Activated B cell treated with CpG ODN at 0.5 μM for 24 hours (primary cell): ENCODE measurements at regions of chr6 and their contacts with region 1.

Region 1: DNA sequence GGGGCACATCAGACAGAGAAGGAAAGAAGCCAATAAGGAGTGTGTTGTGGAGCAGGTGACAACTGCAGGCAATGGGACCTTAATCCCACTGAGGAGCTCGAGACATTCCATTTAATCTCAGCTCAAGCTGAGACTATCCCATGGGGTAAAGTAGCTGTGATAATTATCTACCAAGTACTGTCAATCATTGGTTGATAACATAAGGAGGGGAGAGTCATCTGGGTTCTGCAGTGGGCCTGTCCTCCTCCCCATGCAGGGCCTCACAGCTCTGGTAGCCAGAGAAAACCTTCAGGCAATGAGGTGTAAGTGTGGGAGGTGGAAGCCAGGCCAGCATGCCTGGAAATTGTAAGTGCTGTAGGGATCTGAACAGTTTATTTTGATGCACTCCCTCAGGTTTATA is 375.0 kb upstream of the ARID1B start:
- DNase-seq: no peak
- ATAC-seq: no peak
- H3K4me3 Mint-ChIP-seq: no peak overlapping the region
- H3K27ac Mint-ChIP-seq: no peak overlapping the region
- H3K4me1 Mint-ChIP-seq: peaks cover 19% of the 10 kb centered on the region
- H3K27me3 Mint-ChIP-seq: no peaks in the 10 kb centered on the region
- CTCF ChIP-seq: no peak

Region 2: GRCh38 chr6:156175971-156176421 is 226.2 kb before region 1 on chr6:
- CTCF ChIA-PET with region 1: no interaction called
- POLR2A ChIA-PET with region 1: interaction called, 10 read pairs
- intact Hi-C with region 1: no loop called
- DNase-seq: no peak
- ATAC-seq: no peak
- H3K4me3 Mint-ChIP-seq: no peak overlapping the region
- H3K27ac Mint-ChIP-seq: no peak overlapping the region
- H3K4me1 Mint-ChIP-seq: peaks cover 6% of the 10 kb centered on the region
- H3K27me3 Mint-ChIP-seq: no peaks in the 10 kb centered on the region
- CTCF ChIP-seq: no peak

Region 3: GRCh38 chr6:156423829-156424228 is 21.6 kb after region 1 on chr6:
- CTCF ChIA-PET with region 1: no interaction called
- POLR2A ChIA-PET with region 1: no interaction called
- intact Hi-C with region 1: loop called (anchors 2 kb)
- DNase-seq: no peak
- ATAC-seq: no peak
- H3K4me3 Mint-ChIP-seq: no peak overlapping the region
- H3K27ac Mint-ChIP-seq: no peak overlapping the region
- H3K4me1 Mint-ChIP-seq: peaks cover 21% of the 10 kb centered on the region
- H3K27me3 Mint-ChIP-seq: peaks cover 3% of the 10 kb centered on the region
- CTCF ChIP-seq: no peak